Breast epithelium (tissue), 4 donors: ENCODE measurements at regions of chr16 and their contacts with region 1.

Region 1: GRCh38 chr16:84277237-84277823 is 17.3 kb upstream of the WFDC1 start:
- DNase-seq: no peak
- H3K4me3 ChIP-seq: no peak overlapping the region
- H3K27ac ChIP-seq: no peak overlapping the region
- H3K4me1 ChIP-seq: no peaks in the 10 kb centered on the region
- H3K27me3 ChIP-seq: no peaks in the 10 kb centered on the region
- CTCF ChIP-seq: peak; percentile 70 to 80 (median 78)
- POLR2A ChIP-seq: no peak

Region 2: DNA sequence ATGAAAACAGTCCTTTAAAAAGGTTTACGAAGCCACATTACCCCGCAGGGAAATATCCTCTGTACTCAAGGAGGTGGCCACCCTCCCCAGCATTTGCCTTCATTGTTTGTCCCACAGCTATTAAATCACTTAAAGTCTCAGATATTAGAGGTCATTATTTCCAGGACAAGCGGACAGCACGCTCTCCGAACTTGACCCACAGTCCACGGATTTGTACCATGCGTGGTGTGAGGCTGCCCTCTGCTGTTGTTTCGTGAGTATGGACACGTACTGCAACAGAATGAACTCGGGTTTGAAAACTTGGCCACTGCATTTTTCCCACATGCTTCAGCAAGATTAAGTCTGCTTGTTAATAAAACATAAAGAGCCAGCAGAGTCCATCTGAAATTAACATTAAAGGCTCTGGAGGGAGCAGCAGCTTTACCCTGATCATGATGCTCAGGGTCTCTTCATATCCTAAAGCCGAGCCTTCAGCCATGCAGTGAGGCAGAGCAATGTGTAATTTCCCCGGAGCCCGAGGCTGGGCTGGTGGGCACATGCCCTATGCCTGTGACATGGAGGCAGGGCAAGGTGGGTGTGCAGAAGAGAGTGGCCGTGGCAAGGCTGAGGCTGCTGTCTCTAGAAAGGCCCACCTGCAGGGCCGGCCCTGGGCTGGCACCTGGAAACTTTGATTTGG is 207.4 kb after region 1 on chr16:
- intact Hi-C with region 1: loop called (anchors 10 kb)
- DNase-seq: peak; percentile 30 to 67
- H3K4me3 ChIP-seq: no peak overlapping the region
- H3K27ac ChIP-seq: no peak overlapping the region
- H3K4me1 ChIP-seq: no peaks in the 10 kb centered on the region
- H3K27me3 ChIP-seq: no peaks in the 10 kb centered on the region
- CTCF ChIP-seq: peak in 2 of 3 donors; percentile 79 to 85
- POLR2A ChIP-seq: no peak